ENCODE measurements at regions of chr14 and their contacts with region 1.

Region 1: DNA sequence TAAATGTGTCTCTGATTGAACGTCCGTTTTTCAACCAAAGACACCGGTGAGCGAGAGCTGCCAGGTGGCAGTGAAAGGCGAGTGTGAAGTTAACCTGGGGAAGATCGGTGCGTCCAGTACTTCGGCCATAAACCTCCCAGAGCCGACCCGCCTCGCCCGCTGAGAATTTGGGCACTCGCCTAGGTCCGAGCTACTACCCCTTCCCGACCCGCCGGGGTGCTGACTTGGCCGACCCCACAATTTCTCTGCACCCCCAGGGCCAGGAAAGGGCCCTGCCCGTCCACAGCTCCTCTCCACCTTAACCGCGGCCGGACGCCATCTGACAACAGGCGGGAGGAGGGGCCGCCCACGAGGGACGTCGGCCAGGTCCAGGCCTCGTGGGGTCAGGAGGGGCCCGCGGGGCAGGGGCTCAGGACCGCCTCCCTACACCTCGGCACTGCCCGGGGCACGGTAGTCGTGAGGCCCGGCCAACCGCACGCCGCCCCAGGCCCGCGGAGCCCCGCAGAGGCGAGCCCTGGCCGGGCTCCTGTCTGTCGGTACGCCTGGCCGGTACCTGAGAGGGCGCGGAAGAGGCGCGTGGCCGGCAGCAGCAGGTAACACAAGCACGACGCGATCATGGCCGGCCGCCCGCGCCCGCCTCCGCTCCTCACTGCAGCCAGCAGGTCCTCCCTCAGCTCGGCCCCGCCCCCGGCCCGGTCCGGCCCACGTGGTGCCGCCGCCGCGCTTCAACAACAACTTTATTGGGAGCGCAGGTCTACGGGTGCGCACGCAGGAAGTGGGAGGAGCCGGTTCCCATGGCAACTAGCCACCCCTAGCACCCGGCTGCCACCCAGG is at the start of gene ANGEL1:
- DNase-seq: peak; percentile 97 to 98
- ATAC-seq: peak; percentile 94
- H3K4me3 ChIP-seq: peak within 1 kb of the TSS; percentile 63 to 77
- H3K27ac ChIP-seq: peak within 1 kb of the TSS in 1 of 2 donors; percentile 37
- H3K4me1 ChIP-seq: peaks cover 0 to 3% of the 10 kb centered on the region in 2 donors
- H3K27me3 ChIP-seq: no peaks in the 10 kb centered on the region
- total RNA-seq, gene ANGEL1: 17.1 to 32.2 TPM

Region 2: DNA sequence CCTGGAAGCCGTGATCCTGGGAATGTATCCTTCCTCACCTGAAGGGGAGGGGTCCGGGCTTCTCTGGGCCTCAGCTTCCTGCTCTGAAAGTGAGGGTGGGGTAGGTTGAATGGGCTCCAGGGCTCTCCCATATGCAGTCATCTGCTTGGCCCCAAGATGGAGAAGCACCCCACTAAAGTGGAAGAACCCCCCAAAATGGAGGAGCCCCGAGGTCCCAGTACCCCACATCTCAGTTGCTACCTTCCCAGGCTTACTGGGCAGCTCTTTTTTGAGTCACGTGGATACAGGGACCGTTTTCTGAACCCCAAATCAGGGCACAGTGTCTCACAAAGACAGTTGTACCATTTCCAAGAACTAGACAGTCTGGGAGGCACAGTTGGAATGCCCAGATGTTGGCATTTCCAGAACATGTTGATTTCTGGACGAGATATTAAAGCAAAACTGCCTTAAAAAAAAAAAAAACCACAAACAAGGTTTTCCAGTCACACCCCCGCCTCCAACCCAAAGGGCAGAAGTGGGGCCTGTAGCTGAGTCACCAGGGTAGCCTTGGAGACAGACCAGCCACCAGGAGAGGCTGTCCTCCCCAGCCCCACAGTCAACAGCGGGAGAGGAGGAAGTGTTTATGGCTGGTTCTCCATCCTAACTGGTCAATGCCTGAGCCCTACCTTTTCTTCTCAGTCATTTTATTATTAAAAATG is 39.1 kb before region 1 on chr14:
- intact Hi-C with region 1: loop called in 1 of 2 experiments (anchors 5 kb)
- DNase-seq: peak; percentile 86 to 90
- ATAC-seq: peak; percentile 85
- H3K4me3 ChIP-seq: no peak overlapping the region
- H3K27ac ChIP-seq: peak overlapping the region; percentile 65 to 96
- H3K4me1 ChIP-seq: peaks cover 0 to 4% of the 10 kb centered on the region in 2 donors
- H3K27me3 ChIP-seq: no peaks in the 10 kb centered on the region